SK-N-SH (cell line): ENCODE measurements at regions of chr14 and their contacts with region 1.

Region 1: GRCh38 chr14:74860906-74861733 is 14.8 kb downstream of the PROX2 start:
- DNase-seq: peak; percentile 82
- H3K4me3 ChIP-seq: no peak overlapping the region
- H3K27ac ChIP-seq: no peak overlapping the region
- H3K4me1 ChIP-seq: no peaks in the 10 kb centered on the region; a peak in 1 of 4 replicates
- H3K27me3 ChIP-seq: no peaks in the 10 kb centered on the region
- CTCF ChIP-seq: peak; percentile 87
- EP300 ChIP-seq: no peak
- RAD21 ChIP-seq: peak; percentile 94

Region 2: GRCh38 chr14:74836251-74836960 is 24.7 kb before region 1 on chr14:
- CTCF ChIA-PET with region 1: interaction called, 12 read pairs
- POLR2A ChIA-PET with region 1: no interaction called
- DNase-seq: no peak
- H3K4me3 ChIP-seq: no peak overlapping the region
- H3K27ac ChIP-seq: peak overlapping the region; percentile 72 to 83; a peak in 3 of 4 replicates
- H3K4me1 ChIP-seq: peaks cover 19 to 22% of the 10 kb centered on the region in 2 experiments
- H3K27me3 ChIP-seq: no peaks in the 10 kb centered on the region
- CTCF ChIP-seq: no peak
- EP300 ChIP-seq: no peak
- RAD21 ChIP-seq: no peak

Region 3: GRCh38 chr14:74841230-74842207 is 19.6 kb before region 1 on chr14:
- CTCF ChIA-PET with region 1: interaction called, 103 read pairs
- POLR2A ChIA-PET with region 1: interaction called, 4 read pairs
- DNase-seq: no peak
- H3K4me3 ChIP-seq: no peak overlapping the region
- H3K27ac ChIP-seq: peak overlapping the region in 1 of 2 experiments; percentile 34; a peak in 2 of 4 replicates
- H3K4me1 ChIP-seq: peaks cover 14 to 41% of the 10 kb centered on the region in 2 experiments; a peak in 3 of 4 replicates
- H3K27me3 ChIP-seq: no peaks in the 10 kb centered on the region
- CTCF ChIP-seq: no peak
- EP300 ChIP-seq: no peak
- RAD21 ChIP-seq: no peak

Region 4: GRCh38 chr14:74875941-74876913 is 15.1 kb after region 1 on chr14 and contains the start of gene PROX2:
- CTCF ChIA-PET with region 1: interaction called, 94 read pairs
- POLR2A ChIA-PET with region 1: no interaction called
- DNase-seq: no peak
- H3K4me3 ChIP-seq: no peak within 1 kb of the TSS
- H3K27ac ChIP-seq: no peak within 1 kb of the TSS
- H3K4me1 ChIP-seq: peaks cover 0 to 4% of the 10 kb centered on the region in 2 experiments; a peak in 1 of 4 replicates
- H3K27me3 ChIP-seq: no peaks in the 10 kb centered on the region
- CTCF ChIP-seq: no peak
- EP300 ChIP-seq: no peak
- RAD21 ChIP-seq: no peak
- polyA plus RNA-seq, gene PROX2: not detected in 2 replicates

Region 5: DNA sequence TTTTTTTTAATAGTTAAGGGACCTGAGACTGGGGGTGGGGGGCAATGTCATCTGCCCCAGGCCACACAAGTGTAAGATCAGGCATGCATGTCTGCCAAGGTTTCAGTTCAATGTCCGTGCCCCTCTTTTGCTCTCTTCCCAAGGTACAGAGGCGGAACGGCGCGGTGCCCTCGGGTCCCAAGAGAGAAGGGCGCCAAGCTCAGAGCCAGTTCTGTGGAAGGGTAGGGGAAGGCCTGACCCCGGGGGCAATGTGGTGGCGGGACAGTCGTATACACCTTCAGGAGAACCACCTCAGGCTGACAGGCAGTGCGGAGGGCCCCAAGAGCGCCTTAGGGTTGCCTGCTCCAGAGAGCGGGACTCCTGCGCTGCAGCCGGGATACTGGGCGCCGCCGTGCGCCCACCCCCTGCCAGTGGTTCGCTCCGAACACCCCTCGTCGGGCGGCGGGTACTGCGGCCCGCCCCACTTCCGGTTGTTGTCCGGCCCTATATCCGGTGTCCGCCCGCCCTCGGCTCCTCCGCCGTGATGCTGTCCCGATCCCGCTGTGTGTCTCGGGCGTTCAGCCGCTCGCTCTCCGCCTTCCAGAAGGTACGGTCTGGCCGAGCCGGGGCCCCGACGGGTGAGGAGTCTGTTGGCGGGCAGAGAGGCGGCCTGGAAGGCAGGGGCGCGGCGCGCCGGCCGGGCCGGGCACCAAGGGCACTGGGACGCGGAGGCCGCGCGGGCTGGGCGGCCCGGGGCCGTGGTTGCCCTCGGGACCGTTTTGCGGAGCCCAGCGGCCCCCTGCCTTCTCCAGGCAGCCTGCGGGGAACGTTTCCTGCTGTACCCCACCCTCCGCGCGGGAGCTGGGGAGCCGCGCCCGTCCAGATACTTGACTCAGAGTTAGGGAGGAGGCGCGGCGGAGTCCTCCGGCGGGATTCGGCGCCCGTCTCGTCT is 20.6 kb after region 1 on chr14 and contains the start of gene DLST:
- CTCF ChIA-PET with region 1: interaction called, 94 read pairs
- POLR2A ChIA-PET with region 1: interaction called, 3 read pairs
- DNase-seq: peak; percentile 99
- H3K4me3 ChIP-seq: peak within 1 kb of the TSS; percentile 86 to 92
- H3K27ac ChIP-seq: peak within 1 kb of the TSS; percentile 80 to 88
- H3K4me1 ChIP-seq: peaks cover 0 to 21% of the 10 kb centered on the region in 2 experiments; a peak in 2 of 4 replicates
- H3K27me3 ChIP-seq: no peaks in the 10 kb centered on the region
- CTCF ChIP-seq: no peak
- EP300 ChIP-seq: no peak
- RAD21 ChIP-seq: no peak
- polyA plus RNA-seq, gene DLST: 92.3 and 117 TPM in 2 replicates

Region 6: DNA sequence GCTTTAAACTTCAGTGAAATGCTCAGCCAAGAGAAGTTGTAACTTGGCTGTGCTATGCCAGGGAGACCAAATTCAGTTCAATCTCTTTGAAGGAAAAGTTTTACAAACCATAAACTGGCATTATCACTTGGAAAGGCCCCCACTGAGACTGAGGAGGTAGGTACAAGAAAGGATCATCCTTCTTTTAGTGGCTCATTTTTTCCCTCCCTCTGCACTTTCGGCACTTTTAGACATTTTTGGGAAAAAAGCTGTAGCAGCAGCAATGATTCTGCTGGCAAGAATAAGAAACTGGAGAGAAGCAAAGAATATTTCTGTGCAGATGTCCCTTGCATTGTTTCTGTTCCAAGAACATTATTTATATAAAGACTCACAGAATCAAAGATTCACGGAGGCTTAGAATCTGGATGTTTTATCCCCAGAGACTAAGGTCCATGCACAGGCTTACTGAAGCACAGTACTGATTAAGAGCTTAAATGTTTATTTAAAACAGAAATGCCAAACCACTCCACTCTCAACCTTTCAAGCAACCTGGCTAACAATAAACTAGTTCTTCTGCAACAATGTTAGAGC is 220.6 kb after region 1 on chr14:
- CTCF ChIA-PET with region 1: interaction called, 44 read pairs
- POLR2A ChIA-PET with region 1: no interaction called
- DNase-seq: no peak
- H3K4me3 ChIP-seq: no peak overlapping the region
- H3K27ac ChIP-seq: peak overlapping the region; percentile 11 to 41; a peak in 3 of 4 replicates
- H3K4me1 ChIP-seq: peaks cover 0 to 16% of the 10 kb centered on the region in 2 experiments; a peak in 2 of 4 replicates
- H3K27me3 ChIP-seq: no peaks in the 10 kb centered on the region
- CTCF ChIP-seq: no peak
- EP300 ChIP-seq: no peak
- RAD21 ChIP-seq: no peak

Region 7: GRCh38 chr14:75604856-75605851 is 744.0 kb after region 1 on chr14:
- CTCF ChIA-PET with region 1: no interaction called
- POLR2A ChIA-PET with region 1: no interaction called
- DNase-seq: no peak
- H3K4me3 ChIP-seq: no peak overlapping the region
- H3K27ac ChIP-seq: no peak overlapping the region
- H3K4me1 ChIP-seq: no peaks in the 10 kb centered on the region; a peak in 1 of 4 replicates
- H3K27me3 ChIP-seq: peaks cover 29% of the 10 kb centered on the region; the same call in 1 of the 2 replicates
- CTCF ChIP-seq: no peak
- EP300 ChIP-seq: no peak
- RAD21 ChIP-seq: no peak